ENCODE measurements at regions of chr11 and their contacts with region 1.

Region 1: DNA sequence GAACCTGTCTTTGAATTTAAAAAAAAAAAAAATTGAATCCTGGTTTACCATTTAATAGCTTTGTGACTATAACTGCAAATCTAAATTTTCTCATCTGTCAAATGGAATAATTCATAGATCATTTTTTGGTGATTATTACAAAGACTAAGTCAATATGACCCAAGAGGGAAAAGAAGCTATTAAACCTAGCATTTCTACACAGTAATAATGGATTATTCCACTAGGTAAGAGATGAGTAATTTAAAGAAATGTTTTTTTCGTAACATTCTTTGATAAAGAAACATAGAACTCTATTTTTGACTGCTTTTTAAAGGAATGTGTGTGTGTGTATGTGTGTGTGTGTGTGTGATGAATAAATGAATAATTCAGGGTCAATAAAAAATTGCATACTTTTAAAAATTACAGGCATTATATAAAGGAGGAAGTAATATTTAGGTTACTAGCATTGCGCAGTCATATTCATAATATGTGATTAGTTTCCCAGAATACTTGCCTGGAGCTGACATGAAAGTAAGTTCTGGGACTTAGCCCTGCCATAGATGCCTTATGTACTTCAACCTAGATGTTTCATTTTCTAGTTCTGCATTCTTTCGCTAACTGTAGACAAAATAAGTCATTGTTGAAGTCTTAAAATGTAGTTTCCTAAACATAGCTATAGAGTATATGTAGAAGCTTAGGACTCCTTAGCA is 72.9 kb downstream of the TMEM135 start:
- DNase-seq: no peak
- ATAC-seq: no peak
- H3K4me3 ChIP-seq: no peak overlapping the region
- H3K27ac ChIP-seq: no peak overlapping the region
- H3K4me1 ChIP-seq: no peaks in the 10 kb centered on the region
- H3K27me3 ChIP-seq: no peaks in the 10 kb centered on the region
- CTCF ChIP-seq: no peak
- POLR2A ChIP-seq: no peak
- RAD21 ChIP-seq: no peak

Region 2: GRCh38 chr11:87097582-87097981 is 13.0 kb before region 1 on chr11:
- CTCF ChIA-PET with region 1: interaction called, 18 read pairs
- POLR2A ChIA-PET with region 1: no interaction called
- RAD21 ChIA-PET with region 1: no interaction called
- intact Hi-C with region 1: no loop called
- DNase-seq: peak; percentile 19
- ATAC-seq: peak; percentile 92
- H3K4me3 ChIP-seq: no peak overlapping the region
- H3K27ac ChIP-seq: no peak overlapping the region
- H3K4me1 ChIP-seq: no peaks in the 10 kb centered on the region
- H3K27me3 ChIP-seq: no peaks in the 10 kb centered on the region
- CTCF ChIP-seq: peak; percentile 22 to 87 (median 69); a peak in 5 of 6 replicates
- POLR2A ChIP-seq: no peak
- RAD21 ChIP-seq: peak; percentile 34

Region 3: DNA sequence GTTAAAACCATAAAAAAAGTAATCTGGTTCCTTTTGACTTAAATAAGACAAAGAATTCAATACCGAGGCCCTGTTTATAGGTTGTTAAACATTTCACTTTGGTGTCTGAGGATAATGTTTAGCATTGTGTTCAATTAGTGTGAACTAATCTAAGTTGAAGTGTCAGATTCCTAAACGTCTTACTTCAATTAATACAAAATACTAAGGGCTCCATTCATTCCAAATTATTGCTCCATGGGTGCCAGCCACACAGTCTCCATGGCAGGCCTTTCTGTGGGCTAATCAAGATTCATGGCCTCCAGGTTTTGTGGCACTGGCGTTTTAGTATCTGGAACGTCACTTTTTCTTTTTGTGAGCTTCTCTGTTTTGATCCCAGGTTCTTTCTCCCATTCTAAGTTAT is 16.5 kb after region 1 on chr11:
- CTCF ChIA-PET with region 1: no interaction called
- POLR2A ChIA-PET with region 1: no interaction called
- RAD21 ChIA-PET with region 1: no interaction called
- intact Hi-C with region 1: no loop called
- DNase-seq: no peak
- ATAC-seq: no peak
- H3K4me3 ChIP-seq: no peak overlapping the region
- H3K27ac ChIP-seq: no peak overlapping the region
- H3K4me1 ChIP-seq: no peaks in the 10 kb centered on the region
- H3K27me3 ChIP-seq: no peaks in the 10 kb centered on the region
- CTCF ChIP-seq: no peak
- POLR2A ChIP-seq: no peak
- RAD21 ChIP-seq: no peak

Measured in HCT116 (cell line).